Pancreas (tissue), 10 donors: ENCODE measurements at regions of chr1 and their contacts with region 1.

Region 1: GRCh38 chr1:47709021-47709871 is 271.4 kb downstream of the FOXD2 start:
- DNase-seq: peak in 2 of 6 donors; percentile 14 to 68
- ATAC-seq: peak; percentile 41 to 65 (median 62)
- H3K4me3 ChIP-seq: peak overlapping the region; percentile 2 to 45 (median 24)
- H3K27ac ChIP-seq: no peak overlapping the region
- H3K4me1 ChIP-seq: peaks cover 0 to 17% (median 0%) of the 10 kb centered on the region in 3 donors
- H3K27me3 ChIP-seq: peaks cover 0 to 31% (median 2%) of the 10 kb centered on the region in 4 donors
- CTCF ChIP-seq: peak in 1 of 4 donors; percentile 13

Region 2: GRCh38 chr1:47437447-47438164 is 271.6 kb before region 1 on chr1 and contains the start of gene FOXD2:
- intact Hi-C with region 1: loop called in 1 of 3 experiments (anchors 5 kb)
- DNase-seq: peak; percentile 84 to 98 (median 90)
- ATAC-seq: peak; percentile 91 to 95 (median 93)
- H3K4me3 ChIP-seq: peak within 1 kb of the TSS; percentile 43 to 71 (median 66)
- H3K27ac ChIP-seq: peak within 1 kb of the TSS; percentile 49 to 88 (median 80)
- H3K4me1 ChIP-seq: peaks cover 5 to 9% (median 5%) of the 10 kb centered on the region in 3 donors
- H3K27me3 ChIP-seq: peaks cover 0 to 7% (median 5%) of the 10 kb centered on the region in 4 donors
- CTCF ChIP-seq: peak; percentile 99 to 100 (median 100)
- total RNA-seq, gene FOXD2: 0.04 to 0.19 (median 0.09) TPM

Region 3: DNA sequence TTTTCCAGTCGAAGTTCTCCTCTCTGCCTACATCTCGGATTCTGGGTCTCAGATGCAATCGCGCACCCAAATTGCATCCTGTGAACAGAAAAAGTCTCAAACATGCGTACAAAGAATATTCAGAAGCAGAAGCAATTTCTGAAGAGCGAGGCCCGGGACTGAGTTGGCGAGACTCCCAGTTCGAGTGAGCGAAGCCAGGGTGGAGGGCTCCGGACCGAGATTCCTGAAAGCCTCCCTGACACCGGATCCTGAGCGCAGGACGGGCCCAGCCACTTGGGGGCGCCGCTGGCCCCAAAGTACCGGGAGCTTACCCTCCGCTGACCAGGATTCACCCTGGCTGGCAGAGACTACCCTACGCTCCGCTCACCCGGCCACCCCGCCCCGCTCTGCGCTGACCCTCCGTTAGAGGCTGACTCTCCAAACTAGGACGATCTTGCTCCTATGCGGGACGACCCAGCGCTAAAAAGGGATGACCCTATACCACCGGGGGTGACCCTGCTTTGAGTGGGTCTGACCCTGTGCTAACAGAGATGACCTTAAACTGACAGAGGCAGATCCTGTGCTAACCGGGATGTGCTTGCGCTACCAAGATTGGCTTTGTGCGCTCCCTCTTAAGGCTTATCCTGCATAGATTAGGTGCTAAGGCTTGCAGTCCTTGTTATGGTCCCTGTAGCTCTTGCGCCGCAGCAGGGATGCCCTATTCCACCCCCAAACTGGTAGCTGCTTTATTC is 259.3 kb before region 1 on chr1:
- intact Hi-C with region 1: loop called in 1 of 3 experiments (anchors 5 kb)
- DNase-seq: peak in 5 of 6 donors; percentile 21 to 83 (median 63)
- ATAC-seq: peak; percentile 77 to 95 (median 89)
- H3K4me3 ChIP-seq: no peak overlapping the region
- H3K27ac ChIP-seq: no peak overlapping the region
- H3K4me1 ChIP-seq: no peaks in the 10 kb centered on the region
- H3K27me3 ChIP-seq: peaks cover 0 to 24% (median 9%) of the 10 kb centered on the region in 4 donors
- CTCF ChIP-seq: peak in 2 of 4 donors; percentile 26 to 39

Region 4: GRCh38 chr1:47527658-47528255 is 181.5 kb before region 1 on chr1:
- intact Hi-C with region 1: loop called in 1 of 3 experiments (anchors 10 kb)
- DNase-seq: peak in 2 of 6 donors; percentile 29 to 31
- ATAC-seq: peak; percentile 50 to 84 (median 72)
- H3K4me3 ChIP-seq: no peak overlapping the region
- H3K27ac ChIP-seq: no peak overlapping the region
- H3K4me1 ChIP-seq: no peaks in the 10 kb centered on the region
- H3K27me3 ChIP-seq: no peaks in the 10 kb centered on the region
- CTCF ChIP-seq: peak in 2 of 4 donors; percentile 33 to 39